ENCODE measurements at regions of chr22 and their contacts with region 1.

Region 1: DNA sequence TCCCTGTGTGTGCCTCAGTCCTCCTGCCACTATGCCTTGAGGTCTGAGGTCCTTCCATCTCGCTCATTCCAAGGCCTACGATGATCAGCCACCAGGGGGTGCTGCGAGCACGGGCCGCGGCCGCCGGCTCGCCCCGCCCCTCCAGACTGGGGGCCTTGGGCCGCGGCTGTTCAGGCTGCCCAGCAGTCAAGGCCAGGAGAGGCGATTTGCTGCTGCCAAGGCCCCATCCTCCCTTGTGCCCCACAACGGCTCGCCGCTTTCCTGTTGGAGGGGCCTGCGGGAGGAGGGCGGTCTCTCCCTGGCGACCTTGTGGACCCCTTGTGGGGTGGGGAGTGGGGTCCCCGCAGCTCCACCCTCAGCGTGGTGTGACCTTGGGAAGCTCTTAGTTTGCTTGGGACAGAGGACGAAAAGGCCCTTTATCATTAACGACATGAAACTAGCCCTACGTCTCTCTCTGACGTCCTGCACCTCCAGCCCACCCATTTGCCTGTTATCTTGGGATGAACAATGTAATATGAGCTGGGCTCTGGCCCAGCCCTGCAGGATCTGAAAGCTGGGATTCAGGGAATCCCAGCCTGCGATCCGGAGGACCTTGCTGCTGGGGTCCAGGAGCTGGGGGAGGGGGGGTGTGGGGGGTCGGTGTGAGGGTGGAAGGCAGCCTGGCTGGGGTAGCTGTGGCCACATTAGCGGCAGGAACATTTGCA is 5.3 kb upstream of the GALR3 start:
- DNase-seq: no peak
- H3K4me3 ChIP-seq: peak overlapping the region; percentile 10; the same call in 1 of the 2 replicates
- CTCF ChIP-seq: peak; percentile 90

Region 2: GRCh38 chr22:37244114-37244921 is 573.5 kb before region 1 on chr22 and contains the start of gene RAC2:
- CTCF ChIA-PET with region 1: no interaction called
- POLR2A ChIA-PET with region 1: no interaction called
- DNase-seq: no peak
- H3K4me3 ChIP-seq: peak within 1 kb of the TSS; percentile 60
- CTCF ChIP-seq: no peak

Region 3: GRCh38 chr22:37832022-37832857 is 14.4 kb after region 1 on chr22:
- CTCF ChIA-PET with region 1: interaction called, 65 read pairs
- POLR2A ChIA-PET with region 1: interaction called, 8 read pairs
- DNase-seq: no peak
- H3K4me3 ChIP-seq: no peak overlapping the region
- CTCF ChIP-seq: no peak

Region 4: GRCh38 chr22:37849089-37849751 is 31.4 kb after region 1 on chr22 and contains the start of gene EIF3L:
- CTCF ChIA-PET with region 1: interaction called, 65 read pairs
- POLR2A ChIA-PET with region 1: interaction called, 8 read pairs
- DNase-seq: no peak
- H3K4me3 ChIP-seq: peak within 1 kb of the TSS; percentile 82
- CTCF ChIP-seq: no peak

Region 5: DNA sequence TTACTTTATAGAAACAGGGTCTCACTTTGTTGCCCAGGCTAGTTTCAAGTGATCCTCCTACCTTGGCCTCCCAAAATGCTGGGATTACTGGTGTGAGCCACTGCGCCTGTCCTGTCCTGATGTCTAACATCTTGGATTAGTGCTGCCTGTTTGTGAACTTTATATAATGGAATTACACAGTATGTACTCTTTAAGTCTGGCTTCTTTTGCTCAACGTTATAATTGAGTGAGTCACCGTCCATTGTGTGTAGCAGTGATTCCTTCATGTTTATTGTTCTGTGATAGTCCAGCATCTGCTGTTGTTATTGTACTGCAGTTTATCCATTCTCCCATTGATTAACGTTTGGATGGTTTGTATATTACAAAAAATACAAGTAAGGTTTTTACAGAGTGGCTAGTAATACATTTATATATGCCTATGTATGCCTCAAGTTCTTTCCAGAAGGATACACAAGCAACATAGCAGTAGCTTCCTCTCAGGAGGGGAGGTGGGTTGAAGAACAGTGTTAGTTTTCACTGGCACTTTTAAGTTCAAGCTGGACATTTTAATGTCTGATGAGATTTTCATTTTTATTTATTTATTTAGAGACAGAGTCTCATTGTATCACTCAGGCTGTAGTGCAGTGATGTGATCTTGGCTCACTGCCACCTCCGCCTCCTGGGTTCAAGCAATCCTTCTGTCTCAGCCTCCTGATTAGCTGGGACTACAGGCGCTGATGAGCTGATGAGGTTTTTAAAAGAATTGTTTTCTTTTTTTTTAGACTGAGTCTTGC is 63.0 kb after region 1 on chr22:
- CTCF ChIA-PET with region 1: interaction called, 10 read pairs
- POLR2A ChIA-PET with region 1: no interaction called
- DNase-seq: no peak
- H3K4me3 ChIP-seq: no peak overlapping the region
- CTCF ChIP-seq: no peak

Region 6: DNA sequence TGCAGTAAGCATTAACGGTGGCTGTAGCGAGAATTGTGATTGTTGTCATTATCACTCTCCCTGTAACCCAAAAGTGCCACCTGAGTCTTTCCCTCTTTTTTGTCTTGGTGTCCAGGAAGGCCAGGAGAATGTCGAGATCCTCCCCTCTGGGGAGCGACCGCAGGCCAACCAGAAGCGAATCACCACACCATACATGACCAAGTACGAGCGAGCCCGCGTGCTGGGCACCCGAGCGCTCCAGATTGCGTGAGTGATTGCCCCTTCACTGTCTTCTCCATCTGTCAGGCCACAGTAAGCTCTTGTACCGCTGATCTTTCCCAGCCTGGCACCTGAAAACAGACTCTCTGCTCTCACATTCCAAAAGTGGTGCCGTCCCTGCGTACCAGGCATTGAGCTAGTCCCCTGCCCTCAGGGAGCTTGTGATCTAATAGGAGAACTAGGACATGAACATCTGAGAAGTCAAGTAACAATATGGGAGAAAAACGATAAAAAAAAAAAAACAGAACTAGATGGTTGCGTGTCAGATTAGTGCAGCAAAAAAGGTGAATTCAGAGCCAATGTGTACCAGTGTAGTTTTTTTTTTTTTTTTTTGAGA is 141.5 kb after region 1 on chr22:
- CTCF ChIA-PET with region 1: interaction called, 84 read pairs
- POLR2A ChIA-PET with region 1: no interaction called
- DNase-seq: no peak
- H3K4me3 ChIP-seq: no peak overlapping the region
- CTCF ChIP-seq: no peak

Measured in AG04449 (cell line).